Right cardiac atrium (tissue), 5 donors: ENCODE measurements at regions of chr17 and their contacts with region 1.

Region 1: DNA sequence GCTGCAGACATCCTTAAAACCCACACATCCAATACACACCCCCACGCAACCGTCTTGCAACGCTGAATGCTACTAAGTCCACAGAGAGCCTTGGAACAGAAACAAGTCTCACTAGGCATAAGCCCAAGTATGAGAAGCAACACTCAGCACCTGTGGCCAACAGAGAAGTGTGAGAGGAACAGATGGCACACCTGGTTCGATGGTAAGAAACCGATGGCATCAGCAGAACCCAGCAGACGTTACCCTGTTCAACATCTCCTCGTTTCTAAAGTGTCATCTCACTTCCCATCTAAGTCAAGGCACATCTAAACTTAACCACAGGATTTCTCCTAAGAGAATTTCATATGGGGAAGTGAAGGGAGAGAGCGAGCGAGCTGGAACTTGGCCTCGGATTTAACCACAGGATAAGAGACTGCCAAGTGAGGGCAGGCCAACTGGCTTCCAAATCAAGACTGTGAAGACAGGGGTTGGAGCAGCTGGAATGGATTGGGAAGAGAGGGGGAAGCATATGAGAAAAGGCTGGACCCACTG is 41.0 kb downstream of the NXPH3 start:
- DNase-seq: peak; percentile 84 to 92 (median 88)
- ATAC-seq: peak; percentile 90 to 92
- H3K4me3 ChIP-seq: no peak overlapping the region
- H3K27ac ChIP-seq: peak overlapping the region; percentile 54
- H3K4me1 ChIP-seq: peaks cover 9% of the 10 kb centered on the region
- H3K27me3 ChIP-seq: no peaks in the 10 kb centered on the region

Region 2: GRCh38 chr17:49659661-49660382 is 43.2 kb after region 1 on chr17:
- intact Hi-C with region 1: no loop called
- DNase-seq: no peak
- ATAC-seq: no peak
- H3K4me3 ChIP-seq: no peak overlapping the region
- H3K27ac ChIP-seq: no peak overlapping the region
- H3K4me1 ChIP-seq: peaks cover 6% of the 10 kb centered on the region
- H3K27me3 ChIP-seq: no peaks in the 10 kb centered on the region

Region 3: DNA sequence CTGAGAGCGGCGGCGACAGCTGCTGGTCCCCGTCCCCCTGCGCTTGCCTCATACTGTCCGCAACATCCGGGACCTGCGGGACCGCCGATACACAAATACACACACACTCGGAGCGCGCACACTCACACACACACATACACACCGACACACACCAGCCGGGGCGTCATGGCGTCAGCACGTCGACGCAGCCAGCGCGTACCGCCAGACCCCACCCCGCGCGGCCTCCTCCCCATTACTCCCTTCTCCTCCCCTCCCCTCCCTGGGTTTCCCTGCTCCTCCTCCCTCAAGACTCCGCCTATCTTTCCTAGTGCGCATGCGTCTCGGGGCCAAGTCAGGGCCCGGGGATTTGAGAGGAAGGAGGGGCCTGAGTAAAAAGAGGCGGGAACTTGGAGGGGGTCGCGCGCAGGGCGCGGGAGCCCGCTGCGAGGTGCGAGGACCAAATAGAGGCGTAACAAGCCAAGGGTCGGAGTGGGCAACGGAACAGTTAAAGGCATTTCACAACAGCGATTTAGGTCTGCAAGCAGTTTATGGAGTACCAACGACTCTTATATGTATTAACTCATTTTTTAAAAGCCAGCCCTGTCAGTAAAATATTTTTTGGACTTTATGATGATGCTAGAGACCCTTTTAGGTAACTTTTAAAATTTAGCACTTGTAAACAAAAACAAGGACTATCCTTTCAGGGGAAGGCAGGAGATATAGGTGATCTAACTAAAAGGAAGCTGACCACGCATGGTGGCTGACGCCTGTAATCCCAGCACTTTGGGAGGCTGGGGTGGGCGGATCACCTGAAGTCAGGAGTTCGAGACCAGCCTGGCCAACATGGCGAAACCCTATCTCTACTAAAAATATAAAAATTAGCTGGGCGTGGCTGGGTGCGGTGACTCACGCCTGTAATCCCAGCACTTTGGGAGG is 61.5 kb after region 1 on chr17 and contains the start of gene SPOP:
- intact Hi-C with region 1: loop called in 1 of 4 experiments (anchors 10 kb)
- DNase-seq: peak; percentile 99 to 100 (median 100)
- ATAC-seq: peak; percentile 99
- H3K4me3 ChIP-seq: peak within 1 kb of the TSS; percentile 70
- H3K27ac ChIP-seq: peak within 1 kb of the TSS; percentile 91
- H3K4me1 ChIP-seq: no peaks in the 10 kb centered on the region
- H3K27me3 ChIP-seq: no peaks in the 10 kb centered on the region
- total RNA-seq, gene SPOP: 61.0 to 82.7 (median 76.6) TPM